HCT116 (cell line): ENCODE measurements at regions of chr9 and their contacts with region 1.

Region 1: DNA sequence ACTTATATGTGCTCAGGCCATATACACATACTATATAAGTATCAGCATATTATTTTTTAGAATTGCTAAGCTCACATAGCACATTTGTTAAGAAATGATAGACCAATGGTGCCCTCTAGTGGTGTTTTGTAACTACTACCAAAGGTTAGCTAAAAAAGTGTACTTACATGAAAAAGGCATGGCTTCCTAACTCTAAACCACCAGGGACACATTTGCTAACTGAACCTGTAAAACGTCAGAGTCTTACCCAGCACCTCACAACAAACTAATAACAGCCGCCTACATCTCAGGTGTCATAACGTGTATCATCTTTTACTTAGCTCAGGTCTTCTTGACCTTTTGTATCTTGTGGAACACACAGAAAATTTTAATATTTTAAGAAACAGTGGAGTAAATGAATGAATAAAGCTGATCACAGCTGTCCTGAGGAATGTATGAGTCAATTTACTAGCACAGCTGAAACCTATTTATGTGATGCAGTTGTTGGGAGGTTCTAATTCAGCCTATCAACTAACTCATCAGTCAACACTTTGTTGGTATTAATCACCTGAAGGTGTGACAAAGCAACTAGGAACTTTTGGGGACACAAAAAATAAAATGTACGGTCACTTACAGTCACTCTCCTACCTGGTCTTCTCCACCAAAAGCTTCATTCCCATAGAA is 72.9 kb downstream of the BAAT start:
- DNase-seq: peak; percentile 83
- ATAC-seq: peak; percentile 87
- H3K4me3 ChIP-seq: no peak overlapping the region
- H3K27ac ChIP-seq: no peak overlapping the region
- H3K4me1 ChIP-seq: no peaks in the 10 kb centered on the region
- H3K27me3 ChIP-seq: peaks cover 49% of the 10 kb centered on the region
- CTCF ChIP-seq: peak; percentile 46 to 77 (median 77); a peak in 5 of 6 replicates
- POLR2A ChIP-seq: no peak
- RAD21 ChIP-seq: peak; percentile 80

Region 2: GRCh38 chr9:100700689-100701318 is 611.1 kb before region 1 on chr9:
- CTCF ChIA-PET with region 1: interaction called, 22 read pairs
- POLR2A ChIA-PET with region 1: no interaction called
- RAD21 ChIA-PET with region 1: no interaction called
- intact Hi-C with region 1: loop called (anchors 1 kb)
- DNase-seq: peak; percentile 32
- ATAC-seq: peak; percentile 88
- H3K4me3 ChIP-seq: no peak overlapping the region
- H3K27ac ChIP-seq: no peak overlapping the region
- H3K4me1 ChIP-seq: no peaks in the 10 kb centered on the region
- H3K27me3 ChIP-seq: 0 out of 2 replicates have a peak, but pooled peaks cover 3% of the 10 kb centered on the region
- CTCF ChIP-seq: peak; percentile 45 to 83 (median 60); a peak in 5 of 6 replicates
- POLR2A ChIP-seq: no peak
- RAD21 ChIP-seq: peak; percentile 61

Region 3: DNA sequence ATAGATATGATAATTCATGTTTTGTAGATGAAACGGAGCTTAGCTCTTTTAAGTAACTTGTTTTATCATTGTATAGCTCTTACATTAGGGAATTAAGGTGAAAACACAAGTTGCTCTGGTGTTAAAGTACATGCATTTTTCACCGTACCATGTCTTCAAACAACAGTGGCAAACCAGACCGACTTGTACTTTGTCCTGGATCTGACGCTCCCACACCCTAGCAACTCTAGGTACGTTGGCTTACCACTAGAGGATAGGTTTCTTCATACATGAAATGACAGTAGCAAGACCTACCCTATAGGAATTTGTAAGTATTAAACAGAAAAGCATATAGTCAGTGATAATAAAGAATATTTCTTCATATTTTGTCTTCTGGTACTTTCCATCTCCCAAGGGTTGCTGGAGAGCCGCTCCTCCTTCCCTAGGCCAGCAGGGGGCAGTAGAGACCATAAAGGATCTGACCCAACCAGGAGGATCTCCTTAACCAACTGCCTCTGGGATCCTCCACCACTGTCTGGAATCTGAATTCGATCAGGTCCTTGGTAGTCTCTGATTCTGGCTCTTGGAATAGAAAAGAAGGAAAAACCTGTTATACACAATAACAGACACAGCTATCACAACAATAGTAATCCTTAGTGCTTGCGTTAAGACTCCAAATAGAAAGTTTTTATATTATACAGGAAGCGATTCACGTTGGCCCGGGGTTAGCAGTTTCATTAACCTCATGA is 597.4 kb before region 1 on chr9:
- CTCF ChIA-PET with region 1: interaction called, 13 read pairs
- POLR2A ChIA-PET with region 1: no interaction called
- RAD21 ChIA-PET with region 1: no interaction called
- intact Hi-C with region 1: no loop called
- DNase-seq: peak; percentile 41
- ATAC-seq: peak; percentile 99
- H3K4me3 ChIP-seq: no peak overlapping the region
- H3K27ac ChIP-seq: no peak overlapping the region
- H3K4me1 ChIP-seq: no peaks in the 10 kb centered on the region
- H3K27me3 ChIP-seq: peaks cover 10% of the 10 kb centered on the region; the same call in 1 of the 2 replicates
- CTCF ChIP-seq: peak; percentile 52 to 95 (median 94)
- POLR2A ChIP-seq: no peak
- RAD21 ChIP-seq: peak; percentile 82

Region 4: DNA sequence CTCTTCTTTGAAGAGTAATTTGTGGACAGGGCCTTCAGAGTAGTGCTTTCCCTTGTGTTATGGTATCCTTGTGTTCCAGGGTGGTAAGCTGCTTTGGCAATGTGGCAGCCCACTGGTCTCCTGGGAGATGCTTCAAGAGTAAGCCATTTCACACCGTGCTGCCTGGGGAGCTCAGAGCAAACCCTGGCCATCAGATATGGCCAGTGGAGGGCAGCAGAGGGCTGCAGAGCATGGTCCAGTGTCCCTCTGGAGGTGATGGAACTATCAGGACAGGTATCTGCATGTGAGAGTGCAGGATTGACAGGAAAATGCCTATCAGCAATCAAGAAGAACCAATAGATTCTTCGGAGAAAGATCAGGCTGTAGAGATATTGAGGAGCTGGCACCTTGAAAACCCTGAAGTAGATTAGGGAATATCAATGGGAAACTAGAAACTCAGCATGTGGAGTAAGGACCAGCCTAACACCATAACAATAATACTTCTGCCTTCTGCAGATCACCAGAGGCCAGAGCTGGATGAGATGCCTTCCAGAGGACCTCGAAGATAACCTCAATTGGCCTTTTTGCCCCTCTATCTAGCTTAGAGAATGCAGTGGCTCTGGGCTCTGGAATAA is 192.6 kb before region 1 on chr9:
- CTCF ChIA-PET with region 1: interaction called, 34 read pairs
- POLR2A ChIA-PET with region 1: no interaction called
- RAD21 ChIA-PET with region 1: interaction called, 4 to 6 read pairs
- intact Hi-C with region 1: loop called (anchors 1 kb)
- DNase-seq: peak; percentile 28
- ATAC-seq: peak; percentile 100
- H3K4me3 ChIP-seq: no peak overlapping the region
- H3K27ac ChIP-seq: no peak overlapping the region
- H3K4me1 ChIP-seq: no peaks in the 10 kb centered on the region
- H3K27me3 ChIP-seq: peaks cover 6% of the 10 kb centered on the region; the same call in 1 of the 2 replicates
- CTCF ChIP-seq: peak; percentile 52 to 89 (median 84); a peak in 5 of 6 replicates
- POLR2A ChIP-seq: no peak
- RAD21 ChIP-seq: peak; percentile 68

Region 5: GRCh38 chr9:101235105-101235866 is 76.6 kb before region 1 on chr9:
- CTCF ChIA-PET with region 1: interaction called, 10 read pairs
- POLR2A ChIA-PET with region 1: no interaction called
- RAD21 ChIA-PET with region 1: no interaction called
- intact Hi-C with region 1: no loop called
- DNase-seq: peak; percentile 13
- ATAC-seq: peak; percentile 67
- H3K4me3 ChIP-seq: no peak overlapping the region
- H3K27ac ChIP-seq: no peak overlapping the region
- H3K4me1 ChIP-seq: no peaks in the 10 kb centered on the region
- H3K27me3 ChIP-seq: peaks cover 3% of the 10 kb centered on the region; the same call in 1 of the 2 replicates
- CTCF ChIP-seq: peak; percentile 33 to 58 (median 54); a peak in 5 of 6 replicates
- POLR2A ChIP-seq: no peak
- RAD21 ChIP-seq: peak; percentile 71

Region 6: DNA sequence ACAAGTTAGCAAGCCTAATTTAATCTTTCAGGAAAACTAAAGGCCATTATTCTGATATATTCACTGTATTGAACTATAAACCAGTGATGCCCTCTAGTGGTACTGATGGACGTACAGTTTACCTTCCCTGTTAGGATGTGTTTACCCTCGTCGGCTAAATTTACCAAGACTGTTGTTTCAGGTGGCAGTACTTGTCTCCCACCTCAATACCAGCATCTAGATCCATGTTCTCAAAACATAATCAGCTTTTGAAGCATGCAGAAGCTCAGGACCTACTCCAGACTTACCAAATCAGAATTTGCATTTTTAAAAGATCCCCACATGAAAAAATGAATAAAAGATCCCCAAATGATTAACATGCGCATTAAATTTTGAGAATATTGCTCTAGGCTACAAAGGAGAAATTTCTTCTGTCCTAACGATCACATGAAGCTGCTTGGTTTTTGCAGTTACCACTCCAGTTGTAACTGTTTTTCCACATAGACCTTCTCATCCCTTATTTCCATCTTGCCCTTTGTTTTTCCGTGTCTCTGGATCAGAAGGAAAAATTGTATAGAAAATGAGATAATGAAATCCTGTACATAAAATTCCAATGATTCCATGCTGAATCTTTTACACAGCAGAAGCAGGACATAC is 76.1 kb after region 1 on chr9:
- CTCF ChIA-PET with region 1: interaction called, 21 read pairs
- POLR2A ChIA-PET with region 1: no interaction called
- RAD21 ChIA-PET with region 1: interaction called in 1 of 2 experiments, 3 read pairs
- intact Hi-C with region 1: no loop called
- DNase-seq: peak; percentile 58
- ATAC-seq: peak; percentile 97
- H3K4me3 ChIP-seq: no peak overlapping the region
- H3K27ac ChIP-seq: no peak overlapping the region
- H3K4me1 ChIP-seq: no peaks in the 10 kb centered on the region
- H3K27me3 ChIP-seq: no peaks in the 10 kb centered on the region
- CTCF ChIP-seq: peak; percentile 45 to 75 (median 70); a peak in 5 of 6 replicates
- POLR2A ChIP-seq: no peak
- RAD21 ChIP-seq: peak; percentile 47